Activated naive CD4-positive, alpha-beta T cell treated with anti-CD3 and anti-CD28 coated beads, Interleukin-2, amount 10 ng/mL, durations not matched to agents 7 days and 5 days (primary cell): ENCODE measurements at regions of chr1 and their contacts with region 1.

Region 1: GRCh38 chr1:204565617-204566582 is 49.7 kb downstream of the MDM4 start:
- DNase-seq: peak; percentile 73
- H3K4me3 Mint-ChIP-seq: no peak overlapping the region
- H3K27ac Mint-ChIP-seq: peak overlapping the region; percentile 89
- H3K4me1 Mint-ChIP-seq: peaks cover 75% of the 10 kb centered on the region
- H3K27me3 Mint-ChIP-seq: no peaks in the 10 kb centered on the region

Region 2: GRCh38 chr1:204516180-204516879 is 49.6 kb before region 1 on chr1 and contains the start of gene MDM4:
- CTCF ChIA-PET with region 1: interaction called, 16 read pairs
- DNase-seq: peak; percentile 96
- H3K4me3 Mint-ChIP-seq: no peak within 1 kb of the TSS
- H3K27ac Mint-ChIP-seq: no peak within 1 kb of the TSS
- H3K4me1 Mint-ChIP-seq: peaks cover 76% of the 10 kb centered on the region
- H3K27me3 Mint-ChIP-seq: no peaks in the 10 kb centered on the region

Region 3: DNA sequence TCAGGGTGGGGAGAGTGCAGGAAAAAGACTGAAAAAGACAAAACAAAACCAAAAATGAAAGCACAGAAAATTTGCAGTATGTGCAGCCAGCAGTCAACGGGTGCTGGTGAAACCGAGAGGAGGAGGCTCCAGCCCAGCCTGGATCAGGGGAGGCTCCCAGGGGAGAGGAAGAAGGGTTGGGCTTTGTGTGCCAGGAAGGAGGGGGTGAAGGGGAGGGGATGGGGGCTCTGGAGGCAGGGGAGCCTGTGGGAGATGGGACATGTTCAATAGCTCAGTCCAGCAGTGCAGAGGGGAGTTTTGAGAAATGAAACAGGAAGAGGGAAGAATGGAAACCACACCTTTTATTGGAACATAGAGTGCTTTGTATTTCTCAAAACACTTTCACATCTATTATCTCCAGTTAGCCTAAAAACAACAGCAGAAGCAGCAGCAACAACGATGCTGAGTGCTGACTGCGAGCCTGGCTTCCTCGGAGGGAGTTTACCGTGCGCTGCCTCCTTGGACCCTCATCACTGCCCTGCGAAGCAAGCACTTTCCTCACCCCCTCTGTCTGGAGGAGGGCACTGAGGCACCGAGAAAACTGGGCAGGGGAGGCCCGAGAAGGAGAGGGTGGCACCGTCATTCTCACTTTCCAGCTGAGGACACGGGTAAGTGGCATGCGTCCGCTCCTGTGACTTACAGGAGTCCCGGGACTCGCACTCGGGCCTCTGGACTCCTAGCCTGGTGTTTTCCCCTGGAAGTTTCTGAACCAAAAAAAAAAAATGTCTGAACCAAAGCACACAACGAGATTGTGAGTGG is 13.2 kb after region 1 on chr1:
- CTCF ChIA-PET with region 1: interaction called, 30 read pairs
- DNase-seq: peak; percentile 82
- H3K4me3 Mint-ChIP-seq: peak overlapping the region; percentile 75
- H3K27ac Mint-ChIP-seq: peak overlapping the region; percentile 96
- H3K4me1 Mint-ChIP-seq: peaks cover 50% of the 10 kb centered on the region
- H3K27me3 Mint-ChIP-seq: no peaks in the 10 kb centered on the region

Region 4: GRCh38 chr1:204623894-204624361 is 58.0 kb after region 1 on chr1:
- CTCF ChIA-PET with region 1: interaction called, 34 read pairs
- DNase-seq: peak; percentile 57
- H3K4me3 Mint-ChIP-seq: no peak overlapping the region
- H3K27ac Mint-ChIP-seq: no peak overlapping the region
- H3K4me1 Mint-ChIP-seq: no peaks in the 10 kb centered on the region
- H3K27me3 Mint-ChIP-seq: peaks cover 14% of the 10 kb centered on the region

Region 5: GRCh38 chr1:204763706-204764427 is 198.0 kb after region 1 on chr1:
- CTCF ChIA-PET with region 1: interaction called, 92 read pairs
- DNase-seq: peak; percentile 84
- H3K4me3 Mint-ChIP-seq: peak overlapping the region; percentile 8
- H3K27ac Mint-ChIP-seq: no peak overlapping the region
- H3K4me1 Mint-ChIP-seq: peaks cover 9% of the 10 kb centered on the region
- H3K27me3 Mint-ChIP-seq: peaks cover 49% of the 10 kb centered on the region

Region 6: GRCh38 chr1:204791453-204792353 is 225.8 kb after region 1 on chr1:
- CTCF ChIA-PET with region 1: interaction called, 12 read pairs
- DNase-seq: peak; percentile 90
- H3K4me3 Mint-ChIP-seq: no peak overlapping the region
- H3K27ac Mint-ChIP-seq: no peak overlapping the region
- H3K4me1 Mint-ChIP-seq: peaks cover 6% of the 10 kb centered on the region
- H3K27me3 Mint-ChIP-seq: peaks cover 49% of the 10 kb centered on the region